T-cell (primary cell): ENCODE measurements at regions of chr3 and their contacts with region 1.

Region 1: GRCh38 chr3:31960793-31961431 is 20.1 kb downstream of the OSBPL10 start:
- DNase-seq: no peak
- ATAC-seq: no peak
- H3K4me3 ChIP-seq: no peak overlapping the region
- H3K4me3 Mint-ChIP-seq: no peak overlapping the region
- H3K27ac ChIP-seq: no peak overlapping the region
- H3K27ac Mint-ChIP-seq: no peak overlapping the region
- H3K4me1 ChIP-seq: peaks cover 0 to 5% of the 10 kb centered on the region in 2 experiments
- H3K4me1 Mint-ChIP-seq: peaks cover 6 to 19% (median 8%) of the 10 kb centered on the region in 3 donors
- H3K27me3 ChIP-seq: peaks cover 0 to 3% of the 10 kb centered on the region in 2 experiments
- H3K27me3 Mint-ChIP-seq: no peaks in the 10 kb centered on the region

Region 2: DNA sequence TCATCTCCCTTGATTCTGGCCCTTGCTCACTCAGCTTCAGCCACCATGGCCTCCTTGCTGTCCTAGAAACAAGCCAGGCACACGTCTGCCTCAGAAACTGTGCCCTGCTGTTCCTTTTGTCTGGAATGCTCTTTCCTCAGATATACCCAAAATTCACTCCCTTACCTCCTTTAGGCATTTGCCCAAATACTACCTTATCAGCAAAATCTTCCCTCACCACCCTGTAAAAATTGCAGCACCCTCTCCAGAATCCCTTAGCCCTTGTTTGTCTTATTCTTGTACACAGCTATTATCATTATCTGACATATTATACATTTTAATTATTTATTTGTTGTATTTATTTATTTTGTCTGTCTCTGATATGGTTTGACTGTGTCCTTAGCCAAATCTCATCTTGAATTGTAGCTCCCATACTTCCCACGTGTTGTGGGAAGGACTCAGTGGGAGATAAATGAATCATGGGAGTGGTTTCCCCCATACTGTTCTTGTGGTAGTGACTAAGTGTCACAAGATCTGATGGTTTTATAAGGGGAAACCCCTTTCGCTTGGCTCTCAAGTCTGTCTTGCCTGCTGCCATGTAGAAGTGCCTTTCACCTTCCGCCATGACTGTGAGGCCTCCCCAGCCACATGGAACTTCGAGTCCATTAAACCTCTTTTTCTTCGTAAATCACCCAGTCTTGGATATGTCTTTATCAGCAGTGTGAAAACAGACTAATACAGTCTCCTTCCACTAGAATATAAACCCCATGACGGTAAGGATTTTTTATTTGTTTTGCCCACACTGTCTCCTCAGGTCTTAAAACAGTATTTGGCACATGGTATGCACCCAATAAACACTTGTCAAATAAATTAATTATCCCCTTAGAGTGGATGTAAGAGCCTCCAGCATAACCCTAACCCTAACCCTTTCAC is 488.2 kb before region 1 on chr3:
- CTCF ChIA-PET with region 1: no interaction called
- POLR2A ChIA-PET with region 1: interaction called in 1 of 2 experiments, 10 read pairs
- DNase-seq: peak in 2 of 35 experiments; percentile 4 to 36
- ATAC-seq: peak in 3 of 4 experiments; percentile 45 to 64 (median 45)
- H3K4me3 ChIP-seq: no peak overlapping the region
- H3K4me3 Mint-ChIP-seq: no peak overlapping the region
- H3K27ac ChIP-seq: no peak overlapping the region
- H3K27ac Mint-ChIP-seq: peak overlapping the region in 1 of 2 donors; percentile 71
- H3K4me1 ChIP-seq: no peaks in the 10 kb centered on the region
- H3K4me1 Mint-ChIP-seq: peaks cover 14 to 28% (median 26%) of the 10 kb centered on the region in 3 donors
- H3K27me3 ChIP-seq: no peaks in the 10 kb centered on the region
- H3K27me3 Mint-ChIP-seq: no peaks in the 10 kb centered on the region

Region 3: GRCh38 chr3:31922962-31923361 is 38.0 kb before region 1 on chr3:
- CTCF ChIA-PET with region 1: interaction called in 1 of 2 experiments, 11 read pairs
- POLR2A ChIA-PET with region 1: no interaction called
- DNase-seq: no peak
- ATAC-seq: no peak
- H3K4me3 ChIP-seq: no peak overlapping the region
- H3K4me3 Mint-ChIP-seq: no peak overlapping the region
- H3K27ac ChIP-seq: no peak overlapping the region
- H3K27ac Mint-ChIP-seq: no peak overlapping the region
- H3K4me1 ChIP-seq: peaks cover 3 to 5% of the 10 kb centered on the region in 2 experiments
- H3K4me1 Mint-ChIP-seq: peaks cover 5 to 12% (median 7%) of the 10 kb centered on the region in 3 donors
- H3K27me3 ChIP-seq: no peaks in the 10 kb centered on the region
- H3K27me3 Mint-ChIP-seq: no peaks in the 10 kb centered on the region

Region 4: GRCh38 chr3:31946484-31947081 is 14.3 kb before region 1 on chr3:
- CTCF ChIA-PET with region 1: no interaction called
- POLR2A ChIA-PET with region 1: no interaction called
- DNase-seq: no peak
- ATAC-seq: no peak
- H3K4me3 ChIP-seq: no peak overlapping the region
- H3K4me3 Mint-ChIP-seq: no peak overlapping the region
- H3K27ac ChIP-seq: no peak overlapping the region
- H3K27ac Mint-ChIP-seq: peak overlapping the region in 1 of 2 donors; percentile 21
- H3K4me1 ChIP-seq: no peaks in the 10 kb centered on the region
- H3K4me1 Mint-ChIP-seq: peaks cover 0 to 5% (median 0%) of the 10 kb centered on the region in 3 donors
- H3K27me3 ChIP-seq: peaks cover 0 to 8% of the 10 kb centered on the region in 2 experiments
- H3K27me3 Mint-ChIP-seq: peaks cover 6 to 17% of the 10 kb centered on the region in 2 donors

Region 5: GRCh38 chr3:32009101-32009500 is 48.2 kb after region 1 on chr3:
- CTCF ChIA-PET with region 1: no interaction called
- POLR2A ChIA-PET with region 1: no interaction called
- DNase-seq: no peak
- ATAC-seq: no peak
- H3K4me3 ChIP-seq: no peak overlapping the region
- H3K4me3 Mint-ChIP-seq: no peak overlapping the region
- H3K27ac ChIP-seq: no peak overlapping the region
- H3K27ac Mint-ChIP-seq: no peak overlapping the region
- H3K4me1 ChIP-seq: peaks cover 0 to 5% of the 10 kb centered on the region in 2 experiments
- H3K4me1 Mint-ChIP-seq: peaks cover 4 to 9% (median 8%) of the 10 kb centered on the region in 3 donors
- H3K27me3 ChIP-seq: peaks cover 0 to 15% of the 10 kb centered on the region in 2 experiments
- H3K27me3 Mint-ChIP-seq: peaks cover 17 to 19% of the 10 kb centered on the region in 2 donors

Region 6: DNA sequence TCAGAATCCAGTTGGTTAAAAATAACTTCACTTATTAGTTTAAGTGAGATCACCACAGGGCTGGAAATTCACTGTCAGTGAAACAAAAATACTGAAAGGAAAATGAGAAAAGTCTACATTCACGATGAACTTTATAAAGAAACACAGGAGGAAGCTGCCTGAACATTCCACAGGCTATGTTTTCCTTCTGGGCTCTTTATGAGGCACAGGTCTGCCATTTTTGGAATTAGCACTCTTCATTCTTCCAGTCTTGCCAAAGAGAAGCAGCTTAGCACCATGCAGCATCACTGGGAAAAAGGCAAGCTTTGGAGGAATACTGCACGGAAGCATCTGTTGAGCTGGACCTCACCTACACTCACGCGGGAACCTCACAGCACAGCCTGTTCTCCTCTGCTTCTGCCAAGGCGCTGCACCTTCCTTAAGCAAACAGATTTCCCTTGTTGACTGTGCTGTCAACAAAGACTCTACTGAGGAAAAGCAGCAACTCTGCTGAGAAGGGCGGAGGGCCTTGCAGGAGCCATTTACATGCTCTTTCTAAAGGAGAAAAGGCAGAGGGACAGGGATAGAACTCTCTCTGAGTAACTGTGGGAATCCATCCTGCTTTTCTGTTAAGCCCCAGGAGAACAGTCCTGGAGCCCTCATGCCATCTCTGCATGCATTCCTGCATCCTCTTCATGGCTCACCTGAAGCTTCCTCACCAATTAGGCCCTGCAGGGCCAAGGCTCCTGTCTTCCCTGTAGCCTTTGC is 1242.0 kb after region 1 on chr3:
- CTCF ChIA-PET with region 1: no interaction called
- POLR2A ChIA-PET with region 1: no interaction called
- DNase-seq: no peak
- ATAC-seq: no peak
- H3K4me3 ChIP-seq: no peak overlapping the region
- H3K4me3 Mint-ChIP-seq: no peak overlapping the region
- H3K27ac ChIP-seq: no peak overlapping the region
- H3K27ac Mint-ChIP-seq: no peak overlapping the region
- H3K4me1 ChIP-seq: no peaks in the 10 kb centered on the region
- H3K4me1 Mint-ChIP-seq: no peaks in the 10 kb centered on the region
- H3K27me3 ChIP-seq: peaks cover 0 to 5% of the 10 kb centered on the region in 2 experiments
- H3K27me3 Mint-ChIP-seq: peaks cover 3 to 4% of the 10 kb centered on the region in 2 donors